B cell (primary cell): ENCODE measurements at regions of chr19 and their contacts with region 1.

Region 1: GRCh38 chr19:2610637-2611482 is 91.6 kb downstream of the GNG7 start:
- DNase-seq: peak; percentile 89
- ATAC-seq: peak; percentile 58
- H3K4me3 ChIP-seq: peak overlapping the region in 4 of 5 experiments; percentile 31 to 69 (median 56)
- H3K4me3 Mint-ChIP-seq: peak overlapping the region; percentile 88
- H3K27ac ChIP-seq: peak overlapping the region; percentile 88 to 89
- H3K27ac Mint-ChIP-seq: peak overlapping the region; percentile 91
- H3K4me1 ChIP-seq: peaks cover 61 to 83% of the 10 kb centered on the region in 2 donors
- H3K4me1 Mint-ChIP-seq: peaks cover 74% of the 10 kb centered on the region
- H3K27me3 ChIP-seq: no peaks in the 10 kb centered on the region
- H3K27me3 Mint-ChIP-seq: no peaks in the 10 kb centered on the region
- CTCF ChIP-seq: peak; percentile 93

Region 2: GRCh38 chr19:2391118-2391725 is 219.6 kb before region 1 on chr19:
- CTCF ChIA-PET with region 1: interaction called, 20 read pairs
- POLR2A ChIA-PET with region 1: no interaction called
- intact Hi-C with region 1: loop called (anchors 10 kb)
- DNase-seq: peak; percentile 82
- ATAC-seq: peak; percentile 51
- H3K4me3 ChIP-seq: no peak overlapping the region
- H3K4me3 Mint-ChIP-seq: peak overlapping the region; percentile 61
- H3K27ac ChIP-seq: no peak overlapping the region
- H3K27ac Mint-ChIP-seq: peak overlapping the region; percentile 70
- H3K4me1 ChIP-seq: peaks cover 16 to 31% of the 10 kb centered on the region in 2 donors
- H3K4me1 Mint-ChIP-seq: peaks cover 32% of the 10 kb centered on the region
- H3K27me3 ChIP-seq: no peaks in the 10 kb centered on the region
- H3K27me3 Mint-ChIP-seq: no peaks in the 10 kb centered on the region
- CTCF ChIP-seq: peak; percentile 92

Region 3: DNA sequence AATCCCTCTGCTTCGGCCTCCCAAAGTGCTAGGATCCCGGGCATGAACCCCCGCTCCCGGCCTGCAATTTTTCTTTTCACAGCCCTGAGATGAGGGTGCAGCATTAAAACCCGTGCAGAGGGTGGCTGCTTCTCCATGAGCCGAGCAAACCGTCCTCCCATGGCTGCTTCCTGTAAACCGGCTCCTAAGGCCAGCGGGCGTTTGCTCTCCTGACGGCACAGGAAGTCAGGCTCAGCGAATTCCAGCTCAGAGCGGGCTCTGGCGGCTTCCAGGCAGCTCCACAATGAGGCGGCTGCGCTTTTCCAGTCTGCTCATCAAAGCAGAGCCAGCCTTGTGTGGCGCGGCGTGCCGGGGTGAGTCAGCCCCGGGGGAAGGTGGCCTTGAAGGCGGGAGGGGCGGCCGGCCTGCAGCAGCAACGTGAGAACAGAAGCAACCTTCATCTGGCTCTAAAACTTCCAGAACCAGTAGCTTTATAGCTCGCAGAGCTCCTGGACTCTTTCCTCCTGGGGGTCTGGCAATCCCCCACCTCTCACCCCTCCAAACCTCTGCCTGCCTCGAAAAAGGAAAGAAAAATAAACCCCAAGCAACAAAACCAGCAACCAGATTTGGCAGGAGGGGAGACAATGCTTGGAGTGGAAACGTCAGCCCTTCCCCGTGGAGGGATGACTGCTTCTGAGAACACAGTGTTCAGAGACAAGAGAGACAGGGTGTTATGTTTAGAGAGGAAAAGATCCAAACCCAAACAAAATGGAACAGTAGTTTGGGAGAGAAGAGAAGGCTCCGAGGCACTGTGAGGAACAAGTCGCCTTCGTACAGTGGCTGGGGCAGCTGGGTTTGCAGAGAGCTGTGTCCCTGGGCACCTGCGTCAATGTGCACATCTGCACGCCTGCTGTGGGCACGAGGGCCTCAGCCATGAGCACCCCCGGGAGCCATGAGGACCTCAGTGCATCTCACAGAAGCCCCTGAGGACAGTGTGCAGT is 67.1 kb before region 1 on chr19:
- CTCF ChIA-PET with region 1: interaction called, 18 read pairs
- POLR2A ChIA-PET with region 1: interaction called, 3 read pairs
- intact Hi-C with region 1: no loop called
- DNase-seq: peak; percentile 50
- ATAC-seq: peak; percentile 74
- H3K4me3 ChIP-seq: peak overlapping the region in 2 of 5 experiments; percentile 7 to 8
- H3K4me3 Mint-ChIP-seq: peak overlapping the region; percentile 65
- H3K27ac ChIP-seq: no peak overlapping the region
- H3K27ac Mint-ChIP-seq: peak overlapping the region; percentile 57
- H3K4me1 ChIP-seq: peaks cover 19 to 24% of the 10 kb centered on the region in 2 donors
- H3K4me1 Mint-ChIP-seq: peaks cover 32% of the 10 kb centered on the region
- H3K27me3 ChIP-seq: no peaks in the 10 kb centered on the region
- H3K27me3 Mint-ChIP-seq: no peaks in the 10 kb centered on the region
- CTCF ChIP-seq: no peak

Region 4: DNA sequence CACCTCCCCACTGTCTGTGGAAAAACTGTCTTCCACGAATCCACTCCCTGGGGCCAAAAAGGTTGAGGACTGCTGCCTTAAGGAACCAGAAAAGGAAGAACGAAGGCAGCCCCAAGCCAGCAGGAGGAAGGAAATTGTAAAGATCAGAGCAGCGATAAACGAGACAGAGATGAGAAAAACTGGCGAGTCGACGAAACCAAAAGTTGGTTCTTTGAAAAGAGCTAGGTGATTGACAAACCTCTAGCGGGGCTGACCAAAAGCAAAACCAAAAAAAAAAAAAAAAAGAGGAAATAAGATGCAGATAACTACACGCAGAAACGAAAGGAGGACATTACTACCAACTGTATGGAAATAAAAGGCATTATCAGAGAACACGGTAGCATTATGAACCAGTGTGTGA is 58.0 kb before region 1 on chr19:
- CTCF ChIA-PET with region 1: interaction called, 26 read pairs
- POLR2A ChIA-PET with region 1: interaction called, 10 read pairs
- intact Hi-C with region 1: no loop called
- DNase-seq: peak; percentile 88
- ATAC-seq: peak; percentile 92
- H3K4me3 ChIP-seq: peak overlapping the region in 3 of 5 experiments; percentile 21 to 55 (median 29)
- H3K4me3 Mint-ChIP-seq: peak overlapping the region; percentile 75
- H3K27ac ChIP-seq: peak overlapping the region; percentile 46 to 73
- H3K27ac Mint-ChIP-seq: peak overlapping the region; percentile 69
- H3K4me1 ChIP-seq: peaks cover 8 to 15% of the 10 kb centered on the region in 2 donors
- H3K4me1 Mint-ChIP-seq: peaks cover 23% of the 10 kb centered on the region
- H3K27me3 ChIP-seq: no peaks in the 10 kb centered on the region
- H3K27me3 Mint-ChIP-seq: no peaks in the 10 kb centered on the region
- CTCF ChIP-seq: no peak

Region 5: DNA sequence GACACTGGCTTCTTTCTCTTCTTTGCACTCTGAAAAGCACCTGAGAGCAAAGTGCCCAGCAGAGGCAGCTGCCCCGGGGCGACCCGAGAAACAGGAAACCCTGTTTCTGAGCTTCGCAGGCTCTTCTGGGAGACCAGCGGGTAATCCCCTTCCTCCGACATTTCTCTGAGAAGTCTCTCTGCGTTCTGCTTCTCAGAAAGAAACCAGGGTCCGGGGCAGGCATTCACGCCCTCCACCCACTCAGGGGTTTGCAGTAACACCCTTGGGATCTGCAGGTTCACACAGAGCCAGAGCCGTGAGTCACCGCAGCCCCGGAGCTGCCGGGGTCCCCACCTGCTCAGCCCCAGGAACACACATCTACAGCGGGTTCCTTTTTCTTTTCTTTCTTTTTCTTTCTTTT is 49.0 kb before region 1 on chr19:
- CTCF ChIA-PET with region 1: interaction called, 10 read pairs
- POLR2A ChIA-PET with region 1: interaction called, 3 read pairs
- intact Hi-C with region 1: loop called (anchors 5 kb)
- DNase-seq: peak; percentile 82
- ATAC-seq: peak; percentile 94
- H3K4me3 ChIP-seq: peak overlapping the region in 4 of 5 experiments; percentile 42 to 63 (median 56)
- H3K4me3 Mint-ChIP-seq: peak overlapping the region; percentile 89
- H3K27ac ChIP-seq: peak overlapping the region; percentile 65 to 81
- H3K27ac Mint-ChIP-seq: peak overlapping the region; percentile 91
- H3K4me1 ChIP-seq: peaks cover 16 to 33% of the 10 kb centered on the region in 2 donors
- H3K4me1 Mint-ChIP-seq: peaks cover 45% of the 10 kb centered on the region
- H3K27me3 ChIP-seq: no peaks in the 10 kb centered on the region
- H3K27me3 Mint-ChIP-seq: no peaks in the 10 kb centered on the region
- CTCF ChIP-seq: no peak

Region 6: DNA sequence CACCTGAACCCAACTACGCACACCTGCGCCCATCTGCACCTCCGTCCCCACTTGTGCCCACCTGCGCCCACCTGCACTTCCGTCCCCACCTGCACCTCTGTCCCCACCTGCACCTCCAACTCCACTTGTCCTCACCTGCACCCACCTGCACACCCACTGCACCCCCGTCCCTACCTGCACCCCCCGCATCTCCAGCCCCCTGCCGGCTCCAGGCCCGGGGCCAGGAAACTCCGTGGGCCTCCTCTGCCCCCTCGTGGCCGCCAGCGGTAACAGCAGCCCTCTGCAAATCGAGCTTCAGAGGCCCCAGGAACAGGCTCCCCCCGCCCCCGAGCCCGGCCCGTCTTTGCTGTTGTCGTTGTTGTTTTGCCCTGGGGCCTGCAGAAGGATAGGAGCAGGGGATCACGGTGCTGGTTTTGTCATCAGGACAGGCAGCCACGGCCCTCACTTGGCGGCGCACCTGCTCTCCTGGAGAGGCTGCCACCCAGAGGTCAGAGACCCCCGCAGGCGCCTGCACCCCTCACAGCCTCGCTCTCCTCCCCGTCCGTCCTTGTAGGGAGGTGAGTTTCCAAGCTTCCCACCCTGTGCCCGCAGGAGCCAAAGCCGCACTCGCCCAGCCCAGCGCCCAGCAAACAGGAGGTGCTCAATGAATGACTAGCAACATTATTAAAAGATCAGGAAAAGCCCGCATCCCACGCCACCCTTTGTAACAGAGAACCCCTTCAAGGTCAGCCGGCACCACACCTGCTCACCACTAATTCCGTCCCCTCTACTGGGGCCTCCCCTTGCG is 26.2 kb after region 1 on chr19:
- CTCF ChIA-PET with region 1: interaction called, 593 read pairs
- POLR2A ChIA-PET with region 1: interaction called, 5 read pairs
- intact Hi-C with region 1: loop called (anchors 1 kb)
- DNase-seq: peak; percentile 85
- ATAC-seq: peak; percentile 74
- H3K4me3 ChIP-seq: no peak overlapping the region
- H3K4me3 Mint-ChIP-seq: peak overlapping the region; percentile 47
- H3K27ac ChIP-seq: no peak overlapping the region
- H3K27ac Mint-ChIP-seq: peak overlapping the region; percentile 74
- H3K4me1 ChIP-seq: peaks cover 52 to 74% of the 10 kb centered on the region in 2 donors
- H3K4me1 Mint-ChIP-seq: peaks cover 81% of the 10 kb centered on the region
- H3K27me3 ChIP-seq: no peaks in the 10 kb centered on the region
- H3K27me3 Mint-ChIP-seq: no peaks in the 10 kb centered on the region
- CTCF ChIP-seq: peak; percentile 71

Region 7: DNA sequence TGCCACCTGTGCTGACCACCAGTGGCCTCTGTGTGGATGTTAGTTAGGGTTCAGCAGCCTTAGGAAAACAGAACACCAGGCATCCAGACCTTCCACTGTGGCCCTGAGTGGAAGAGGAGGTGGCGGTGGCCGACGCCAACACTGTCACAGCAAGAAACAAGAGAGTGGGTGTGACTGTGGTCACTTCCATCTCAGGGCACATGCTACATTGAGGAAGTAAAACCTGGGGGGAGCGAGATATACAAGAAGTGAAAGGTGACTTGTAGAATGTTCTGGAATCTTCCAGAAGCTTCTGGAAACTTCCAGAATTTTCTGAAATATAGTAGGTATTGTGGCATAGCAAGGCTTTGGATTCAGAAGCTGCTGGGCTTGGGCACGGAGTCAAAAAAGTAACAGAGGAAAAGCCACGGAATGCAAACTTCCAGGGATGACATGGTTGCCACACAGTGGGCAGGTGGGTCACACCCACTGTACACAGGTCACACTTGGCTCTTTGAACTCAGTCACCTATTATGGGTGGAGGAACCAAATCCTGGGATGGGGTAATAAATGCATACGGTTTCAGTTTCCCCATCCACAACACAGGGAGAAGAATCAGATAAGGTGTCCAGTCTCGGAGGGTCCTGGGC is 67.3 kb after region 1 on chr19:
- CTCF ChIA-PET with region 1: no interaction called
- POLR2A ChIA-PET with region 1: no interaction called
- intact Hi-C with region 1: no loop called
- DNase-seq: peak; percentile 91
- ATAC-seq: peak; percentile 59
- H3K4me3 ChIP-seq: no peak overlapping the region
- H3K4me3 Mint-ChIP-seq: peak overlapping the region; percentile 49
- H3K27ac ChIP-seq: peak overlapping the region; percentile 99 to 100
- H3K27ac Mint-ChIP-seq: peak overlapping the region; percentile 88
- H3K4me1 ChIP-seq: peaks cover 56 to 66% of the 10 kb centered on the region in 2 donors
- H3K4me1 Mint-ChIP-seq: peaks cover 70% of the 10 kb centered on the region
- H3K27me3 ChIP-seq: no peaks in the 10 kb centered on the region
- H3K27me3 Mint-ChIP-seq: no peaks in the 10 kb centered on the region
- CTCF ChIP-seq: no peak

Region 8: DNA sequence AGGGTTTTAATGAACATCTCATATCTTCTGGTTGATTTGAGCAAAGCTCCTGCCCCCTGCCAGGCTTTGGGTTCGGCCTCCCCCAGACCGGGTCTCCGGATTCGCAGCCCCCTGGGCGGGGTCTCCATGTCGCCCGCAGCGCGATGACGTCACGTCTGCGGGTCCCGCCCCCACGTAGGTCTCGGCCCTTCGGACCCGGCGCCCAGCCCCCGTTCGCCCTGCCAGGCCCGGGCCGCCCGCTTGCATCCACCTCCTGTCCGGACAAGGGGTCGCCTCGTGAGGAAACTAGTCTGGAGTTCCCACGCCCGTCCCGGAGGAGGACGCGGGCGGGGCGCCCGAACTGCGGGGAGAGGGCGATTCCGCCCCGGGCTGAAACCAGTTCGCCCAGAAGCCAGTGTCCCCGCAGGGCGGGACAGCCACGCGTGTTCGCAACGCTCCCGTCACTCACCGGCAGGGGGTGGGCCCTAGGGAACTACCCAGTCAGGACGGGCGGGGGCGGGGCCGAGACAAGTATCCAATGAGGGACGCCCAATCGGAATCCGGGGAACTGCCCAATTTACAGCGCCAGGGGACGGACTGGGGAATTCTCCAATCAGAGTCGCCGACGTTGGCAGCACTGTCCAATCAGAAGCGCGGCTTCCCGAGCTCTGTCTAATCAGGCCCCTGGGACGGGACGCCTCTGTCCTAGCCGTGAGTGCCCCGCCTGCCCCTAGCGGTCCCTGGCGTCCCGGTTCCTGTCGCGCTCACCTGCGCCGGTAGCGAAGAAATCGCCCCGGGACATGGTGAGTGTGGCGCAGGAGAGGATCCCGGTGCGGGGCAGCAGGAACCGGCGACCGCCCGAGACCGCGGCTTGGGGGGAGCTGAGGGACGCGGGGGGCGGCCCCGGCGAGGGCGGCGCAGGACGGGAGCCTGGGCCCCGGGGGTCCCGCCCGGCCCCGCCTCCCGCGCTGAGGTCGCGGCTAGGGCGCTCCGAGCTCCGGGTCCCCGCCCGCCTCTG is 230.2 kb after region 1 on chr19 and contains the start of gene ZNF555:
- CTCF ChIA-PET with region 1: no interaction called
- POLR2A ChIA-PET with region 1: no interaction called
- intact Hi-C with region 1: no loop called
- DNase-seq: peak; percentile 99
- ATAC-seq: peak; percentile 93
- H3K4me3 ChIP-seq: peak within 1 kb of the TSS; percentile 34 to 77 (median 73)
- H3K4me3 Mint-ChIP-seq: peak within 1 kb of the TSS; percentile 95
- H3K27ac ChIP-seq: peak within 1 kb of the TSS; percentile 83 to 86
- H3K27ac Mint-ChIP-seq: peak within 1 kb of the TSS; percentile 95
- H3K4me1 ChIP-seq: peaks cover 12 to 15% of the 10 kb centered on the region in 2 donors
- H3K4me1 Mint-ChIP-seq: peaks cover 26% of the 10 kb centered on the region
- H3K27me3 ChIP-seq: no peaks in the 10 kb centered on the region
- H3K27me3 Mint-ChIP-seq: no peaks in the 10 kb centered on the region
- CTCF ChIP-seq: peak; percentile 74
- total RNA-seq, gene ZNF555: 7.4 and 9.7 TPM in 2 replicates